Activated T-helper 2 cell treated with anti-CD3 and anti-CD28 coated beads, Interferon-gamma antibody, Interleukin-2, Interleukin-4, amounts not matched to agents 10 μg/mL and 5 μg/mL and 100 μg/mL, durations not matched to agents 14 hours and 24 hours and 36 hours (primary cell): ENCODE measurements at regions of chr14 and their contacts with region 1.

Region 1: GRCh38 chr14:104976198-104977007 is 1.8 kb downstream of the AHNAK2 start:
- DNase-seq: peak; percentile 78
- H3K4me3 Mint-ChIP-seq: peak overlapping the region; percentile 60
- H3K27ac Mint-ChIP-seq: no peak overlapping the region
- H3K4me1 Mint-ChIP-seq: peaks cover 5% of the 10 kb centered on the region
- H3K27me3 Mint-ChIP-seq: peaks cover 19% of the 10 kb centered on the region

Region 2: DNA sequence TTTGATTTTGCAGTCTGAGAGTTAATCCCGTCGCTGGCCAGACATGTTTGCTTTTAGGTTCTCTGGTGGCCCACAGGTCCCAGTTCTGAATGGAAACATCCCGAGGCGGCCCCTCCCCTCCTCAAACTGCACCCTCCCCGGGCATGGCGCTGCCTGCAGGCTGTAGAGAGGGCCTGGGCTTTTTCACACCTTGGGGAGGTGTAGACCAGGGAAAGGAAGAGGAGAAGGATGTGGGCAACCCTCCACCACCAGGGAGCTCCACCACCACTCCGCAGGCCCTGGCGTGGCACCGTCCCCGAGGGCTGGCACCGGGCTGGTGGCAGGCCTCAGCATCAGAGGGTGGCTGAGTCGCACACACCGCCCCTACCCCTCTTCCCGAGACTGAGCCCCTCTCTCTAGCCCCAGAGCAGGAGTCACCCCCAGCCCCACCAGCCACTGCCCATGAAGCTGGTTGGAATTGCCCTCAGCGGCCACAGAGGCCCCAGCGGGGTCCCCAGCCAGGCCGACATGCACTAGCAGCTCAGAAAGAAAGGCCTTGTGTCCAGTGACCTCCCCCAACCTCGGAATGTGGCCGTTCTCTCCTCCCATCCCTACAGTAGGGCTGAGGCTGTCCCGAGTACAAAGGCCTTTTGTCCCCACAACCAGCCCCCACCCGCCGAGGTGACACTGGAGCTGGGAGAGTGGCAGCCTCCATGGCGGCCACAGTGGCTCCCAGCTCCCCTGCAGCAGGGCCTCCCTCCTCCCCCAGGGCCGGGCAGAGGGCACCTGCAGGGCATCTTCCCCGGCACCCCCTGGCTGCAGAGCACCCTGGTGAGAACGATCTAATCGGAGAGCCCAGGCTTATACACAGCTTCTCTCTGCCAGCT is 310.5 kb before region 1 on chr14:
- intact Hi-C with region 1: no loop called
- DNase-seq: no peak
- H3K4me3 Mint-ChIP-seq: no peak overlapping the region
- H3K27ac Mint-ChIP-seq: no peak overlapping the region
- H3K4me1 Mint-ChIP-seq: peaks cover 11% of the 10 kb centered on the region
- H3K27me3 Mint-ChIP-seq: peaks cover 15% of the 10 kb centered on the region

Region 3: DNA sequence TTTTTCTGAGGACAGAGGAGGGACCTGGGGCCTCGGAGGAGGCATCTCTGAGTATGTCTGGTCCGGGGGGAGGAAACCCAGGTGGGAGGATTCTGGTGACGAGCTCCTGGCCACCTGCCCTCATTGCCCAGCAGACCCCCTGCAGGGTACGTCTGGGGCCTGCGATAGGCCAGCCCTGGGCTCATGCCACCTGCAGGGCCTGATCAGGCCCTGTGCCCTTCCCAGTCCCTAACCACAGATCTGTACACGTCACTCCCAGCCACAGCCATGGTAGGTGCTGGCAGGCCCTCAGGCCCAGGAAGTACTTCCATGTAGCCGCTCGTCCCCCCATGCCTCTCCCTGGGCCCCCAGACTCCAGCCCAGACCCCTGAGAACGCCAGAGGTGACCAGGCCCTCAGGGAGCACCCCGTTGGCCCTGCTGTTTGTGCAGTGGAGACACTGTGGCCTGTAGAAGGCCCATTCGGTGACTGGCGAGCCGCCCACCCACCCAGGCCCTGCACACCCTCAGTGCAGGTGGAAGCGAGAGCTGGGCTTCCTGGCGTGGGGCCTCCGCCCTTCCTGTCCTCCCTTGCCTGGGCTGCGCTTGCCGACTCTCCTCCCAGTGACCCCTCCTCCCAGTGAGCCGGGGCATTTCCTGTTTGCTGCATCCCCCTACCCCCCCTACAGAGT is 281.3 kb before region 1 on chr14:
- intact Hi-C with region 1: no loop called
- DNase-seq: peak; percentile 50
- H3K4me3 Mint-ChIP-seq: peak overlapping the region; percentile 60
- H3K27ac Mint-ChIP-seq: peak overlapping the region; percentile 85
- H3K4me1 Mint-ChIP-seq: peaks cover 18% of the 10 kb centered on the region
- H3K27me3 Mint-ChIP-seq: no peaks in the 10 kb centered on the region

Region 4: DNA sequence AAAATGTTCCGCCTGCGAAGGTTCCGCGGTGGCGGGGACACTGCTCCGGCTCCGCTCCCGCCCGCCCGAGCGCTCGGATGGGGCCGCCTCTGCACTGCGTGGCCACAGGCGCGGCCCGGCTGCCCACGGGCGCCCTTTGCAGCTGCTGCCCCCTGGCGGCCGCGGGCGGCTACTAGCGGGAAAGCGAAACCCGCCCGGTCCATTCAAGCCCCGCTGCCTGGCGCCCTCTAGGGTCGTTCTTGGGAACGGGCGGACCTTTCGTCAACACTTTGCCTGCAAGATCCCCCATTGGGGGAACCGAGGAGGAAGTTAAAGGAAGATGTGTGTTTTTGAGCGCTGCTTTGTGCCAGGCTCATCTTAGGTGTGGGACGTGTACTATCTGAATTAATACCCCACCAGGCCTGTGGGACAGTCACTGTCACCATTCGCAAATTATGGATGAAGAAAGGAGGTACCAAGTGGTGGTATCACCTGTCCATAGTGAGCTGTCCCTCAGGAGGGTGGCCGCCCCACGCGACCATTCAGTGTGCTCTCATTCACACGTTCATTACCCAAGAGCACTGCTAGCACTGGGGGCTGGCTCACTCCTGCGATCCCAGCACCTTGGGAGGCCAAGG is 69.4 kb after region 1 on chr14:
- intact Hi-C with region 1: loop called (anchors 1 kb)
- DNase-seq: peak; percentile 86
- H3K4me3 Mint-ChIP-seq: no peak overlapping the region
- H3K27ac Mint-ChIP-seq: no peak overlapping the region
- H3K4me1 Mint-ChIP-seq: peaks cover 11% of the 10 kb centered on the region
- H3K27me3 Mint-ChIP-seq: no peaks in the 10 kb centered on the region